BJ (cell line): ENCODE measurements at regions of chr10 and their contacts with region 1.

Region 1: GRCh38 chr10:30092151-30092790 is 32.9 kb upstream of the JCAD start:
- DNase-seq: no peak
- H3K4me3 ChIP-seq: no peak overlapping the region
- H3K27me3 ChIP-seq: no peaks in the 10 kb centered on the region
- CTCF ChIP-seq: no peak

Region 2: DNA sequence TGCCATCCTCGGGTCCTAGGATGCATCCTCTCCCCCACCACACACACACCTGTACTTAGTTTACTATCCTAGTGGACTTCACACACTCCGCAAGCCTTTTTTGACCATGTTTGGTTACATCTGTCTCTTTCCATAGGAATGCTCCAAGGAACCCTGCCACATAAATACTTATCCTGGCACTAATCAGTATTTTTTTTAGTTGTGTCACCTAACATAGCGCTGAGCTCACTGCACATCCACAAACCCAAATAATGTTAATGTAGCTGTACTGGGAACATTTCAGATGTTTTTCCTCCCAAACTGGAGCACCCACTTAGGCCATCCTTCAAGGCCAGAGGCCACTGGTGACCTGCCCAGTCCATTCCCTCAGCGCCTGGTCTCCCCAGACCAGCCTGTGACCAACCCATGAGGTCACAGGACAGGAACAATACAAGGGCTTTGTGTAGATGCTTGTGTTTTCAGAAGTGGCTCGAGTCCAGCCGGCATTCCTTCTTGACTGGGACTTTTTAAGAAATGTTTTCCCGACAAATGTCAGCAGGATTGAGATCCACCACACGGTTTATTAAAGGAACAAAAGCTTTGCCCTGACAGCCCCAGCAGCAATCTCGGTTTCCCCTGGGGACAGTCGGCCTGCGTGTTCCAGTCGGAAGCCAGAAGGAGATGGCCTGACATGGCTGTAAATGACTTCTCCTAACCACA is 214.3 kb before region 1 on chr10:
- CTCF ChIA-PET with region 1: no interaction called
- POLR2A ChIA-PET with region 1: no interaction called
- DNase-seq: no peak
- H3K4me3 ChIP-seq: no peak overlapping the region
- H3K27me3 ChIP-seq: peaks cover 29% of the 10 kb centered on the region
- CTCF ChIP-seq: no peak

Region 3: DNA sequence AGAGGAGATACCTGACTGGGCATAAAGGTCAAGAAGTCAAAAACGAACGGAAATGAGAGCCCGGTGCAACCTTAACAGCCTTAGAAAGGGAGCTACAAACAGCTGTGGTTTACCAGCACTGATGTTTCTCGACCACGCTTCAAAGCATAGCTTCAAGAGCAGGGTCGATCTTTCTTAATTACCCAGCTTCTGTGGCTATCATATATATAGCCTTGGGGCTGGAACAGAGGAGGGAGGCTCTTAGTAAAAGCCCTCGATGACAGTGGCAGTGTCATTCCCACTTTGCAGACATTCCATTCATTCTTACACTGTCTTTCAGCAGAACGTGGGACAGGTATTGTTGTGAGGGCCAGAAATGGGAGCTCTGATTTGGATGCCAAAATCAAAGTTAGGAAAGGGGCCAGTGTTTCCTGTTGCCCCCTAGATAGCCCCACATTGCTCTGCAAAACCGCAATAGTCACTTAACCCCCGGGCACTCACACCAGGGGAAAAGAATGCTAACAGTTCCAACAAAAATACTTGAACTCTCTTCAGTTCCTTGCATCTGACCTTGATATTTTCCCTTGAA is 115.3 kb after region 1 on chr10:
- CTCF ChIA-PET with region 1: no interaction called
- POLR2A ChIA-PET with region 1: interaction called, 12 read pairs
- DNase-seq: no peak
- H3K4me3 ChIP-seq: no peak overlapping the region
- H3K27me3 ChIP-seq: peaks cover 2% of the 10 kb centered on the region; the same call in 1 of the 2 replicates
- CTCF ChIP-seq: no peak

Region 4: DNA sequence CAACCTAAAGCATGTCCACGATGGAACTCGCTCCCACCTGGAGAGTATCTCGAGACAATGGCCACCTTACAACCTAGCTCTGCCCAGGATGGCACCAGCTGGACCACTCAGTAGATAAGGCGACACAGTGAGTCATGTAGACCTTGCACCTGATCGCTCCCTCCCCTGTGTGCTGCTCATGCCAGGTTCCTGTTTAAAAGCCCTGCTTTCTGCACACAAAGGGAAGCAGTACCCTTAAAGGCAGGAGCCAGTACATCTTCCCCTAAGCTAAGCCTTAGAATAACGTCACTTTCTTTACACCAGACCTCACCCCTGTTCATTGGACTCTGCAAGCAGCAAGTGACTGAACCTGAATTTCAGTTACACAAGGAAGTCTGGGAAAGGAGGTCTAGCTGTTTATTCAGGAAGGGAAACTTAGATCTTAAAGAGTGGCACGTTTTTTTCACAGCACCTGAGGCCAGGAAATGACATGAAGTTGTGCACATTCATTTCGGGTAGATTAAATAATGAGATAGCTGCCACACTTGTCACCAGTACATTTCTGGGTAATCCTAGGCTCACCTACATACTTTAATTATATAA is 138.9 kb after region 1 on chr10:
- CTCF ChIA-PET with region 1: no interaction called
- POLR2A ChIA-PET with region 1: no interaction called
- DNase-seq: no peak
- H3K4me3 ChIP-seq: no peak overlapping the region
- H3K27me3 ChIP-seq: no peaks in the 10 kb centered on the region; the same call in 1 of the 2 replicates
- CTCF ChIP-seq: no peak